Transverse colon (tissue), 4 donors: ENCODE measurements at regions of chr18 and their contacts with region 1.

Region 1: DNA sequence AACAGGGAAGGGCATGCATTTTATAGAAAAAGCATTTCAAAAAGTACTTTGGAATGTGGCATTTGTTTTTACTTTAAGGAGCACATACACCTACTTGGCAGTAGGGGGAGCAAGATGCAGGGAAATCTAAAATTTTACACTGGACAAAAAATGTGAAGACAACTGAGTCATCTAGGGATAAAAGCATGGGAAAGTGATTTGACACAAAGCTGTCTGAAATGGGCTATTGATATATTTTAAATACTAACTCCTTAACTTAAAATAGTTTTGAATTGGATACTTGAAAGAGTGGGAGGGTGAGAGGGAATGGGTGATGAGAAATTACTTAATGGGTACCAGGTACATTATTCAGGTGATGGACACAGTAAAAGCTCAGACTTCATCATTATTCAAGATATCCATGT is 15.8 kb downstream of the TMEM200C start:
- DNase-seq: no peak
- H3K4me3 ChIP-seq: no peak overlapping the region
- H3K27ac ChIP-seq: no peak overlapping the region
- H3K4me1 ChIP-seq: no peaks in the 10 kb centered on the region
- H3K27me3 ChIP-seq: peaks cover 4% of the 10 kb centered on the region
- CTCF ChIP-seq: peak; percentile 62 to 75 (median 69)
- EP300 ChIP-seq: no peak
- POLR2A ChIP-seq: no peak

Region 2: GRCh38 chr18:5620289-5620688 is 259.2 kb before region 1 on chr18:
- in situ Hi-C with region 1: no loop called
- intact Hi-C with region 1: no loop called
- DNase-seq: no peak
- H3K4me3 ChIP-seq: no peak overlapping the region
- H3K27ac ChIP-seq: no peak overlapping the region
- H3K4me1 ChIP-seq: no peaks in the 10 kb centered on the region
- H3K27me3 ChIP-seq: no peaks in the 10 kb centered on the region
- CTCF ChIP-seq: no peak
- EP300 ChIP-seq: no peak
- POLR2A ChIP-seq: no peak

Region 3: GRCh38 chr18:5738526-5738925 is 141.0 kb before region 1 on chr18:
- in situ Hi-C with region 1: no loop called
- intact Hi-C with region 1: no loop called
- DNase-seq: no peak
- H3K4me3 ChIP-seq: no peak overlapping the region
- H3K27ac ChIP-seq: no peak overlapping the region
- H3K4me1 ChIP-seq: no peaks in the 10 kb centered on the region
- H3K27me3 ChIP-seq: no peaks in the 10 kb centered on the region
- CTCF ChIP-seq: no peak
- EP300 ChIP-seq: no peak
- POLR2A ChIP-seq: no peak

Region 4: DNA sequence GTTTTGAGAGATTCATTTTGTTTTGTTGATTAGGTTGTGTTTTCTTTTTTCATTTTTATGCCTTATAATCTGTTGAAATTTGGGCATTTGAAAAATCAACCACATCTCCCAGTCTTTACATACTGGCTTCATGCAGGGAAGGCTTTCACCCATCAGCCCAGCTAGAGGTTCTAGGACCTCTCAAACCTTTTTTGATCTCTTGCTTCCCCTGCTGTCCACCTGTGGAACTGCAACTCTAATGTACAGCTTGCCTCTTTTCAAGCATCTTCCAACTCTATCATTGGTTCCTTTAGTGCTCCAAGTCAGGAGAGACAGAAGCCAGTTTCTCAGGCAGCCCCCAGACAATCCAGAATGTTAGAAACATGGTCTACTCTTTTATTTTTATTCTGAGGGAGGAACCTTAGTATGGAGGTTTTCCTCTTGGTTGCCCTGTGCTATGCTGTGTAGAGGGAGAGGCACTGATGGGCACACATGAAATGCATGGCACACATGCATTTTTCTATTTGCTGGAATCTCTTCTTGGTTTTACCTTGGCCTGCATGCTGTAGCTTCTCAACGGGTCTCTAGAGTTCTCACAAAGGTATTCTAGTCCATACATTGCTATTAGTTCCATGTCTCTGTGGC is 642.4 kb after region 1 on chr18:
- in situ Hi-C with region 1: loop called in 2 of 4 experiments (anchors 10 to 25 kb)
- intact Hi-C with region 1: no loop called
- DNase-seq: peak; percentile 50
- H3K4me3 ChIP-seq: no peak overlapping the region
- H3K27ac ChIP-seq: no peak overlapping the region
- H3K4me1 ChIP-seq: no peaks in the 10 kb centered on the region
- H3K27me3 ChIP-seq: no peaks in the 10 kb centered on the region
- CTCF ChIP-seq: peak; percentile 60 to 73 (median 68)
- EP300 ChIP-seq: no peak
- POLR2A ChIP-seq: no peak

Region 5: GRCh38 chr18:6891788-6892187 is 1012.3 kb after region 1 on chr18:
- in situ Hi-C with region 1: loop called (anchors 25 kb)
- intact Hi-C with region 1: loop called (anchors 10 kb)
- DNase-seq: no peak
- H3K4me3 ChIP-seq: no peak overlapping the region
- H3K27ac ChIP-seq: no peak overlapping the region
- H3K4me1 ChIP-seq: no peaks in the 10 kb centered on the region
- H3K27me3 ChIP-seq: no peaks in the 10 kb centered on the region
- CTCF ChIP-seq: no peak
- EP300 ChIP-seq: no peak
- POLR2A ChIP-seq: no peak